GM12878 (cell line): ENCODE measurements at regions of chr9 and their contacts with region 1.

Region 1: DNA sequence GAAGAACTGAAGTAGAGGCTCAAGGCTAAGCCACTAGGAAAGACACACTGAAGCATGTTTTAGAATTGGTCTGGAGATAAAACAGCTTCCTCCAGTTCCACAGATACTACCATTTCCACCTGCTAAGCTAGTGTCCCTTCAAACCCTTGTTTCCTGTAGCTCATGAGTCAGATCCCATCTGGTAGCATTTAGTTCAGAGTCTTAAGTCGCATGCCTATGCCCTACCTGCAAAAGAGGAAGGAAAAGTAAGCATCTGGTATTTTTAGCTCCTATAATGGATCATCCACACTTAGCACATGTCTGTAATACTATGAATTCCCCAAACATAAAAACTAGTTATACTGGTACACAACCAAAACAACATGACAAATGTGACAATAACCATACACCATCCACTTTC is 92.1 kb downstream of the CDKN2A start:
- DNase-seq: no peak
- ATAC-seq: peak; percentile 67
- H3K4me3 ChIP-seq: no peak overlapping the region
- H3K27ac ChIP-seq: no peak overlapping the region
- H3K4me1 ChIP-seq: peaks cover 8% of the 10 kb centered on the region
- H3K27me3 ChIP-seq: no peaks in the 10 kb centered on the region
- CTCF ChIP-seq: no peak
- EP300 ChIP-seq: no peak
- POLR2A ChIP-seq: no peak
- RAD21 ChIP-seq: no peak

Region 2: GRCh38 chr9:21852754-21853153 is 49.4 kb before region 1 on chr9:
- CTCF ChIA-PET with region 1: no interaction called
- POLR2A ChIA-PET with region 1: no interaction called
- RAD21 ChIA-PET with region 1: no interaction called
- SMC1A ChIA-PET with region 1: no interaction called
- in situ Hi-C with region 1: loop called (anchors 5 kb)
- intact Hi-C with region 1: no loop called
- DNase-seq: peak; percentile 27
- ATAC-seq: peak; percentile 99
- H3K4me3 ChIP-seq: no peak overlapping the region
- H3K27ac ChIP-seq: no peak overlapping the region
- H3K4me1 ChIP-seq: peaks cover 5% of the 10 kb centered on the region; the same call in 1 of the 2 replicates
- H3K27me3 ChIP-seq: no peaks in the 10 kb centered on the region
- CTCF ChIP-seq: no peak
- EP300 ChIP-seq: peak in 1 of 2 experiments; percentile 72; a peak in 1 of 4 replicates
- POLR2A ChIP-seq: no peak
- RAD21 ChIP-seq: no peak